CD4-positive, alpha-beta T cell (primary cell): ENCODE measurements at regions of chr17 and their contacts with region 1.

Region 1: GRCh38 chr17:39927101-39927928 is at the starts of genes LRRC3C and ORMDL3:
- DNase-seq: peak; percentile 83 to 95 (median 88)
- ATAC-seq: peak; percentile 76
- H3K4me3 ChIP-seq: peak within 1 kb of the TSS; percentile 89
- H3K4me3 Mint-ChIP-seq: peak within 1 kb of the TSS; percentile 92
- H3K27ac ChIP-seq: peak within 1 kb of the TSS; percentile 63 to 90
- H3K27ac Mint-ChIP-seq: peak within 1 kb of the TSS; percentile 93
- H3K4me1 ChIP-seq: peaks cover 55% of the 10 kb centered on the region
- H3K4me1 Mint-ChIP-seq: peaks cover 53% of the 10 kb centered on the region
- H3K27me3 ChIP-seq: no peaks in the 10 kb centered on the region
- H3K27me3 Mint-ChIP-seq: no peaks in the 10 kb centered on the region
- CTCF ChIP-seq: no peak
- total RNA-seq, gene LRRC3C: not detected
- total RNA-seq, gene ORMDL3: 103 to 105 TPM

Region 2: GRCh38 chr17:39687811-39688518 is 239.3 kb before region 1 on chr17 and contains the start of gene PGAP3:
- CTCF ChIA-PET with region 1: no interaction called
- POLR2A ChIA-PET with region 1: interaction called, 3 read pairs
- intact Hi-C with region 1: loop called in 1 of 2 experiments (anchors 2 kb)
- DNase-seq: peak; percentile 66 to 91 (median 74)
- ATAC-seq: peak; percentile 87
- H3K4me3 ChIP-seq: peak within 1 kb of the TSS; percentile 74
- H3K4me3 Mint-ChIP-seq: peak within 1 kb of the TSS; percentile 100
- H3K27ac ChIP-seq: peak within 1 kb of the TSS; percentile 83
- H3K27ac Mint-ChIP-seq: peak within 1 kb of the TSS; percentile 98
- H3K4me1 ChIP-seq: peaks cover 19% of the 10 kb centered on the region
- H3K4me1 Mint-ChIP-seq: peaks cover 31% of the 10 kb centered on the region
- H3K27me3 ChIP-seq: no peaks in the 10 kb centered on the region
- H3K27me3 Mint-ChIP-seq: no peaks in the 10 kb centered on the region
- CTCF ChIP-seq: no peak
- total RNA-seq, gene PGAP3: 26.1 to 30.7 TPM

Region 3: DNA sequence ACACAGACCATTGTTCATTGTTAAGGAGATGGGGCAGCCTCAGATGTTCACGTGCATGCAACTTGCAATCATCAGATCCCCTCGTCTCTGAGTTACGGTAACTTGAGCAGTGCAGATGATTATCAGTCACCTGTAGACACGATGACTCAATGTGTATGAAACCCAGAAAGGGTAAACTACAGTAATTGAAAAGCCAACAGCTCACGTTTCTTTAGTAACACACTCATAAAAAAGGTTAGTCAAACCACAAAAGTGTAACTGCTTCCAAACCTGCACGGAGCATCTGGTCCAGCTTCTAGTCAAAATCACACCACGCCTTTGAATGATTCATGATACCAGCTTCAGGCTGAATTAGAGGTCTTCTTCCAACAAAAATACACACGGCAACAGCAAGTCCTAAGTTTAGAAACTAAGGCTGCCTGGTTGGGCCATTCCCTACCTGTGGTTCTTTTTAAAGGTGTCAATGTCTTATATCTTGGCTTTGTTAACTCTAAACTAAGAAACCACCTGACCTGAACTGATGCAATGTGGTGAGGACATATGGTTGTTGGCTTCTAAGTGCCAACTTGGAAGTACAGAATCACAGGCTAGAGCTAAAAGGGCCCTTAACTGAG is 157.2 kb before region 1 on chr17:
- CTCF ChIA-PET with region 1: no interaction called
- POLR2A ChIA-PET with region 1: interaction called, 6 read pairs
- intact Hi-C with region 1: loop called in 1 of 2 experiments (anchors 10 kb)
- DNase-seq: peak; percentile 23 to 87 (median 55)
- ATAC-seq: peak; percentile 83
- H3K4me3 ChIP-seq: peak overlapping the region; percentile 6
- H3K4me3 Mint-ChIP-seq: peak overlapping the region; percentile 8
- H3K27ac ChIP-seq: peak overlapping the region; percentile 66 to 87
- H3K27ac Mint-ChIP-seq: peak overlapping the region; percentile 84
- H3K4me1 ChIP-seq: peaks cover 82% of the 10 kb centered on the region
- H3K4me1 Mint-ChIP-seq: peaks cover 100% of the 10 kb centered on the region
- H3K27me3 ChIP-seq: no peaks in the 10 kb centered on the region
- H3K27me3 Mint-ChIP-seq: no peaks in the 10 kb centered on the region
- CTCF ChIP-seq: no peak

Region 4: GRCh38 chr17:39952680-39953470 is 25.6 kb after region 1 on chr17:
- CTCF ChIA-PET with region 1: interaction called, 4 read pairs
- POLR2A ChIA-PET with region 1: interaction called, 7 read pairs
- intact Hi-C with region 1: loop called in 1 of 2 experiments (anchors 1 kb)
- DNase-seq: peak; percentile 90 to 99 (median 98)
- ATAC-seq: peak; percentile 86
- H3K4me3 ChIP-seq: peak overlapping the region; percentile 66
- H3K4me3 Mint-ChIP-seq: peak overlapping the region; percentile 90
- H3K27ac ChIP-seq: peak overlapping the region; percentile 22 to 41
- H3K27ac Mint-ChIP-seq: peak overlapping the region; percentile 77
- H3K4me1 ChIP-seq: peaks cover 20% of the 10 kb centered on the region
- H3K4me1 Mint-ChIP-seq: peaks cover 25% of the 10 kb centered on the region
- H3K27me3 ChIP-seq: no peaks in the 10 kb centered on the region
- H3K27me3 Mint-ChIP-seq: no peaks in the 10 kb centered on the region
- CTCF ChIP-seq: no peak

Region 5: GRCh38 chr17:39980351-39981206 is 53.3 kb after region 1 on chr17 and contains the start of gene PSMD3:
- CTCF ChIA-PET with region 1: interaction called, 8 read pairs
- POLR2A ChIA-PET with region 1: interaction called, 34 read pairs
- intact Hi-C with region 1: loop called (anchors 1 kb)
- DNase-seq: peak; percentile 95 to 100 (median 98)
- ATAC-seq: peak; percentile 94
- H3K4me3 ChIP-seq: peak within 1 kb of the TSS; percentile 96
- H3K4me3 Mint-ChIP-seq: peak within 1 kb of the TSS; percentile 89
- H3K27ac ChIP-seq: peak within 1 kb of the TSS; percentile 89 to 97
- H3K27ac Mint-ChIP-seq: peak within 1 kb of the TSS; percentile 95
- H3K4me1 ChIP-seq: peaks cover 25% of the 10 kb centered on the region
- H3K4me1 Mint-ChIP-seq: peaks cover 39% of the 10 kb centered on the region
- H3K27me3 ChIP-seq: no peaks in the 10 kb centered on the region
- H3K27me3 Mint-ChIP-seq: no peaks in the 10 kb centered on the region
- CTCF ChIP-seq: peak; percentile 70
- total RNA-seq, gene PSMD3: 66.7 to 71.9 TPM

Region 6: GRCh38 chr17:40075201-40075941 is 148.1 kb after region 1 on chr17:
- CTCF ChIA-PET with region 1: no interaction called
- POLR2A ChIA-PET with region 1: no interaction called
- intact Hi-C with region 1: no loop called
- DNase-seq: peak; percentile 58 to 82 (median 66)
- ATAC-seq: peak; percentile 91
- H3K4me3 ChIP-seq: no peak overlapping the region
- H3K4me3 Mint-ChIP-seq: no peak overlapping the region
- H3K27ac ChIP-seq: no peak overlapping the region
- H3K27ac Mint-ChIP-seq: peak overlapping the region; percentile 10
- H3K4me1 ChIP-seq: peaks cover 47% of the 10 kb centered on the region
- H3K4me1 Mint-ChIP-seq: peaks cover 50% of the 10 kb centered on the region
- H3K27me3 ChIP-seq: no peaks in the 10 kb centered on the region
- H3K27me3 Mint-ChIP-seq: no peaks in the 10 kb centered on the region
- CTCF ChIP-seq: peak; percentile 89